ENCODE measurements at regions of chr19 and their contacts with region 1.

Region 1: GRCh38 chr19:43738780-43739211 is 16.0 kb downstream of the SMG9 start:
- DNase-seq: no peak
- CTCF ChIP-seq: no peak

Region 2: GRCh38 chr19:43809762-43810696 is 71.2 kb after region 1 on chr19:
- in situ Hi-C with region 1: loop called (anchors 5 kb)
- DNase-seq: peak; percentile 58
- CTCF ChIP-seq: peak; percentile 52